ENCODE measurements at regions of chr12 and their contacts with region 1.

Region 1: DNA sequence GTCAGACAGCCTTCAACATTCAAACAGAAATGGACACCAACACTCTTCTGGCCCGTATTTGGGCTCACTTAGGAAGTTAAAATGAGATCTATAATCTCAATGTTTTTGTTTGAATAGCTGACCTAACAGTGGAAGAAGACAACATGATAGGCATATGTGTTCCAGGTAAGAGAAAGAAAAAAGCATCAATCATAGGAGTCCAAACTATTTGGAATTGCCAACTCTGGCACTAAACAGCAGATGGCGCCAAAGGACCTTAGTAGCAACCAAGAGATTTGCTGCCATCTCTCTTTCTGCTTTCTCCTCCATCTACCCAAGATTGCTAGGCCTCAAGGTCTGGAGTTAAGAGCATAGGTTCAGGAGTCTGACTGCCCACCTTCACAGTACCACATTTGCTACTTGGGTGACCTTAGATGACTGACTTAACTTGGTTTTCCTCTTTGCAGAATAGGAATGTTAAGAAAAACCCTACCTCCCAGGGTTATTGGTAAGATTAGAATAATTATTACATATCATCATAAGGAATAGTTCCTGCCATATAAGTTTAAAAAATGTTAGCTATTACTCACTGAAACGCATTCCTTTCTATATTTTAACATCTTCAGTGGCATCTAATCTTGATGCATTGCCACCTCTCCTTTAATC is 30.2 kb downstream of the PEX5 start:
- DNase-seq: peak; percentile 84
- H3K4me3 ChIP-seq: no peak overlapping the region
- H3K27ac ChIP-seq: no peak overlapping the region
- H3K4me1 ChIP-seq: no peaks in the 10 kb centered on the region
- H3K27me3 ChIP-seq: no peaks in the 10 kb centered on the region

Region 2: GRCh38 chr12:7344833-7345606 is 125.3 kb after region 1 on chr12:
- in situ Hi-C with region 1: no loop called
- DNase-seq: no peak
- H3K4me3 ChIP-seq: no peak overlapping the region
- H3K27ac ChIP-seq: no peak overlapping the region
- H3K4me1 ChIP-seq: no peaks in the 10 kb centered on the region
- H3K27me3 ChIP-seq: 0 out of 2 replicates have a peak, but pooled peaks cover 6% of the 10 kb centered on the region

Region 3: GRCh38 chr12:7634561-7634960 is 414.8 kb after region 1 on chr12:
- in situ Hi-C with region 1: loop called (anchors 5 kb)
- DNase-seq: no peak
- H3K4me3 ChIP-seq: no peak overlapping the region
- H3K27ac ChIP-seq: no peak overlapping the region
- H3K4me1 ChIP-seq: no peaks in the 10 kb centered on the region
- H3K27me3 ChIP-seq: peaks cover 5% of the 10 kb centered on the region; the same call in 1 of the 2 replicates